CD14-positive monocyte (primary cell): ENCODE measurements at regions of chr10 and their contacts with region 1.

Region 1: DNA sequence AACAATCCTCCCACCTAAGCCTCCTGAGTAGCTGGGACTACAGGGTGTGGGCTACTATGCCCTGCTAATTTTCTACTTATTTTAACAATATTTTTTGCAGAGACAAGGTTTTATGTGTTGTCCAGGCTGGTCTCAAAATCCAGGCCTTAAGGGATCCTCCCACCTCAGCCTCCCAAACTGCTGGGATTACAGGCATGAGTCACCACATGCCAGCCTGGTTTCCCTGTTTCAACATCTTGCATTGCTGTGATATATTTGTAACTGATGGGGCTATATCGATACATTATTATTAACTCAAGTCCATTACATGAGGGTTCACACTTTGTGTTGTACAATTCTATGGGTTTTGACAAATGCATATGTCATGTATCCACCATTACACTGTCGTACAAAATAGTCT is 41.9 kb upstream of the OGDHL start:
- DNase-seq: no peak
- H3K4me3 ChIP-seq: no peak overlapping the region
- H3K4me3 Mint-ChIP-seq: no peak overlapping the region
- H3K27ac ChIP-seq: no peak overlapping the region
- H3K27ac Mint-ChIP-seq: no peak overlapping the region
- H3K4me1 ChIP-seq: no peaks in the 10 kb centered on the region
- H3K4me1 Mint-ChIP-seq: no peaks in the 10 kb centered on the region
- H3K27me3 ChIP-seq: no peaks in the 10 kb centered on the region
- H3K27me3 Mint-ChIP-seq: peaks cover 1 to 13% (median 6%) of the 10 kb centered on the region in 3 donors
- CTCF ChIP-seq: no peak

Region 2: DNA sequence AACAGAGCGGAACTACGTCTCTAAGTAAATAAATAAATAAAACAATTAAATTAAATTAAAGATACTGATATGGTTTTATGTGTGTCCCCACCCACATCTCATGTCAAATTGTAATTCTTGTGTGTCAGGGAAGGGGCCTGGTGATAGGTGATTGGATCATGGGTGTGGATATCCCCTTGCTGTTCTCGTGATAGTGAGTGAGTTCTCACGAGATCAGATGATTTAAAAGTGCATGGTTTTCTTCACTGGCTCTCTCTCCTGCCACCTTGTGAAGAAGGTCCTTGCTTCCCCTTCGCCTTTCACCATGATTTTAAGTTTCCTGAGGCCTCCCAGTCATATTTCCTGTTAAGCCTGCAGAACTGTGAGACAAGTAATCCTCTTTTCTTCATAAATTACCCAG is 12.9 kb before region 1 on chr10:
- intact Hi-C with region 1: loop called in 1 of 2 experiments (anchors 1 kb)
- DNase-seq: no peak
- H3K4me3 ChIP-seq: no peak overlapping the region
- H3K4me3 Mint-ChIP-seq: no peak overlapping the region
- H3K27ac ChIP-seq: no peak overlapping the region
- H3K27ac Mint-ChIP-seq: no peak overlapping the region
- H3K4me1 ChIP-seq: no peaks in the 10 kb centered on the region
- H3K4me1 Mint-ChIP-seq: no peaks in the 10 kb centered on the region
- H3K27me3 ChIP-seq: no peaks in the 10 kb centered on the region
- H3K27me3 Mint-ChIP-seq: peaks cover 2 to 13% (median 3%) of the 10 kb centered on the region in 3 donors
- CTCF ChIP-seq: no peak